Panc1 (cell line): ENCODE measurements at regions of chr17 and their contacts with region 1.

Region 1: DNA sequence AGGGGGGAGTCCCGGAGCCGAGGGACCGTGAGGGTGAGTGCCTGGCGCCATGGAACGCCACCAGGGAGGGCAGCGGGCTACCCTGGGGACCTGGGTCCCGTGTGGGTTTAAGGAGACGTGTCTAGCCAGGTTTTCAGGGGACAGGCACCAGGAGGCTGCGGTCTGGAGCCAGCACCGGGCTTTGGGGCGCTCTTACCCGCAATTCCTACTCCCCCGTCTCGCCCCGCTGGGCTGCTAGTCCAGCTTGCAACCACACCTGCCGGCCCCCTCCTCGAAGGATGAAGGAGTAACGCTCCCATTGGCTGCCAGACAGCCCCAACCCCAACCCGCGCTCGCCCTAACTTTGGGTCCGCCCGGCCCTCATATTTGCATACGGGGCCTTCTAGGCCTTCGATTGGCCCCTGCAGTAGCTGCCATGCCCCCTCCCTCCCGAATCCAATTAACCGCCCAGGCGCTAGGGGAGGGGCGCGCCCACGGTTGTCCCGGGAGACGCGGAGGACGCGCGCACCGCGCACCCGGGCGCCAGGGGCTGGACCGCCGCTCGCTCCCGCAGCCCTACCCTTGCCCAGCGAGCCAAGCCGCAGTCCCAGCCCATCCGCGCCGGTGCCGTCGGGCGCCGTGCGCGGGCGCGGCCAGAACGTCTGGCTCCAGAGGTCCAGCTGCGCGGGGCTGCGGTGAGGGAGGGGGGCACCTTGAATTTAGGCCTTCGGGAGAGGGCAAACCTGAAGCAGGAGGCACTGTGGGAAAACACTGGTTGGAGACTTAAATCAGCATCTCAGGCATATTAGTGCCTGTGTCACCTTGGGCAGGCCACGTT is at the start of gene TTLL6:
- DNase-seq: no peak
- ATAC-seq: peak; percentile 93
- H3K4me3 ChIP-seq: peak within 1 kb of the TSS; percentile 47 to 63
- H3K27ac ChIP-seq: peak within 1 kb of the TSS; percentile 25; the same call in 1 of the 2 replicates
- H3K4me1 ChIP-seq: peaks cover 16% of the 10 kb centered on the region
- H3K27me3 ChIP-seq: peaks cover 8% of the 10 kb centered on the region; the same call in 1 of the 2 replicates
- CTCF ChIP-seq: no peak
- total RNA-seq, gene TTLL6: 2.5 TPM

Region 2: GRCh38 chr17:48830840-48831548 is 14.0 kb after region 1 on chr17 and contains the start of gene CALCOCO2:
- CTCF ChIA-PET with region 1: interaction called, 4 read pairs
- POLR2A ChIA-PET with region 1: interaction called, 11 read pairs
- in situ Hi-C with region 1: no loop called
- intact Hi-C with region 1: no loop called
- DNase-seq: peak; percentile 64
- ATAC-seq: peak; percentile 99
- H3K4me3 ChIP-seq: peak within 1 kb of the TSS; percentile 68 to 91
- H3K27ac ChIP-seq: peak within 1 kb of the TSS; percentile 92
- H3K4me1 ChIP-seq: peaks cover 18% of the 10 kb centered on the region
- H3K27me3 ChIP-seq: no peaks in the 10 kb centered on the region
- CTCF ChIP-seq: no peak
- total RNA-seq, gene CALCOCO2: 282 TPM

Region 3: DNA sequence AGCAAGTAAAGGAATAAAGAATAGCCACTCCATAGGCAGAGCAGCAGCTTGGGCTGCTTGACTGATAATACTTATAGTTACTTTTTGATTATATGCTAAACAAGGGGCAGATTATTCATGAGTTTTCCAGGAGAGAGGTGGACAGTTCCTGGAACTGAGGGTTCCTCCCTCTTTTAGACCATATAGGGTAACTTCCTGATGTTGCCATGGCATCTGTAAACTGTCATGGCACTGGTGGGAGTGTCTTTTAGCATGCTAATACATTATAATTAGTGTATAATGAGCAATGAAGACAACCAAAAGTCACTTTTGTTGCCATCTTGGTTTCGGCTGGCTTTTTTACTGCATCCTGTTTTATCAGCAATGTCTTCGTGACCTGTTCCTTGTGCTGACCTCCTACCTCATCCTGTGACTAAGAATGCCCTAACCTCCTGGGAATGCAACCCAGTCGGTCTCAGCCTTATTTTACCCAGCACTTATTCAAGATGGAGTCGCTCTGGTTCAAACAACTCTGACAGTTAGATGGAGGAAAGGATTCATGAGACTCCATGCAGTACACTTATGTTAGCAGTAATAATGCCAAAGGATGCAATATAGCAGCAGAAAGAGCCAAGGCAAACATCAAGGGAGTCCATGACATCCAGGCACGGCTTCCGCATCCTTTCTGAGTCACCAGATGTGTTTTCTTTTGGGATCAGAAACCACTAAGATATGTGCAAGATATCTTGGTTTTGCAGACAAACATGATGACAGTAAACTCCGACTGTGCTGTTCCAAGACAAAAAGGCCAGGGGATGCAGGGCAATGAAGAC is 259.8 kb after region 1 on chr17:
- CTCF ChIA-PET with region 1: no interaction called
- POLR2A ChIA-PET with region 1: interaction called, 20 read pairs
- in situ Hi-C with region 1: no loop called
- intact Hi-C with region 1: no loop called
- DNase-seq: peak; percentile 45
- ATAC-seq: peak; percentile 80
- H3K4me3 ChIP-seq: no peak overlapping the region
- H3K27ac ChIP-seq: no peak overlapping the region
- H3K4me1 ChIP-seq: no peaks in the 10 kb centered on the region
- H3K27me3 ChIP-seq: no peaks in the 10 kb centered on the region
- CTCF ChIP-seq: no peak